Endothelial cell of umbilical vein (primary cell): ENCODE measurements at regions of chr5 and their contacts with region 1.

Region 1: DNA sequence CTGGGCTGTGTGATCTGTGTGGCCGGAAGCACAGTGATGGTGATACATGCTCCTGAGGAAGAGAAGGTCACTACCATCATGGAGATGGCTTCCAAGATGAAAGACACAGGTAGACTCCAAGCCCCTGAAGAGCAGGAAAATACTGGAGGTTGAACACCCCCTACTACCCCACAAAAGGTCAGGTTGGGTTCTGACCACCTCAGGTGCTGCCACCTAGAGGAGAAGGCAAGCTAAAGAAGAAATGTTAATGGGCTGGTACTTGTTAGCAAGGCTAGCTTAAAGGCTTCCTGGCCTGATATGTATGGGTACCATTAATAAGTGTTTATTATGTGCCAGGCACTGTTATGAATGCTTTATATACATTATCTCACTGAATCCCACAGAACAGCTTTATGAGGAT is 11.7 kb downstream of the NIPAL4 start:
- DNase-seq: peak; percentile 27
- H3K4me3 ChIP-seq: no peak overlapping the region
- H3K27ac ChIP-seq: no peak overlapping the region
- H3K4me1 ChIP-seq: peaks cover 6% of the 10 kb centered on the region
- H3K27me3 ChIP-seq: no peaks in the 10 kb centered on the region
- CTCF ChIP-seq: peak; percentile 48 to 57
- POLR2A ChIP-seq: no peak

Region 2: DNA sequence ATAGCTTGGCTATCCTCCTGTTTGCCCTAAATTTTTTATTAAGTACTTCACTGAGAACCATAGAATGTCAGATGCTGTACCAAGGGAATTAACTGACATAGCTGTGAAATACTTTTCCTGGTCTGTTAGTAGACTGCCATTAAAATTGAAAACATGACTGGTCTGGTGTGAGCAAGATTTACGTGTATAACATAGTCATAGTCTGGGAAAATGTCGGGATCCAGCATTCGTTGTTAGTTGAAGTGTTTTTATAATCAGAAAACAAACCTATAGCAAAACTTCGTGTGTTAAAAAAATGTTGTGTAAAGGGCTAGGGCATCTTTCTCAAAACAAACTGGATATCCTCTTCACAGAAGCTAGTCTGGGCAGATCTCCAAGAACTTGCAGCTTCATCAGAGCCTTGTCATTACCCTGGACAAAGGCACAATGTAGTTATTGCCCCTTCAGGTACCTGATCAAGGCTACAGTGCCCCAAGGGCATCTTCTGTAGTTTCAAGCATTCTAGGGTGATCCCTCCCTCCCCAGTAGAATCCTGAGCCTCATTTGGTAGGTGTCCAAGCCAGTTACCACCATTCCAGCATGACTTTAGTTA is 1599.0 kb before region 1 on chr5:
- CTCF ChIA-PET with region 1: no interaction called
- POLR2A ChIA-PET with region 1: no interaction called
- dilution Hi-C with region 1: no loop called
- intact Hi-C with region 1: no loop called
- DNase-seq: no peak
- H3K4me3 ChIP-seq: no peak overlapping the region
- H3K27ac ChIP-seq: no peak overlapping the region
- H3K4me1 ChIP-seq: no peaks in the 10 kb centered on the region
- H3K27me3 ChIP-seq: no peaks in the 10 kb centered on the region
- CTCF ChIP-seq: no peak
- POLR2A ChIP-seq: no peak

Region 3: GRCh38 chr5:157108976-157109375 is 362.7 kb before region 1 on chr5 and contains the start of gene HAVCR2:
- CTCF ChIA-PET with region 1: no interaction called
- POLR2A ChIA-PET with region 1: no interaction called
- dilution Hi-C with region 1: no loop called
- intact Hi-C with region 1: no loop called
- DNase-seq: no peak
- H3K4me3 ChIP-seq: no peak within 1 kb of the TSS
- H3K27ac ChIP-seq: no peak within 1 kb of the TSS
- H3K4me1 ChIP-seq: no peaks in the 10 kb centered on the region
- H3K27me3 ChIP-seq: no peaks in the 10 kb centered on the region
- CTCF ChIP-seq: no peak
- POLR2A ChIP-seq: no peak
- total RNA-seq, gene HAVCR2: 0.42 TPM in 1 of 2 replicates, not detected in the other

Region 4: GRCh38 chr5:157303667-157304327 is 167.9 kb before region 1 on chr5:
- CTCF ChIA-PET with region 1: no interaction called
- POLR2A ChIA-PET with region 1: no interaction called
- dilution Hi-C with region 1: no loop called
- intact Hi-C with region 1: no loop called
- DNase-seq: no peak
- H3K4me3 ChIP-seq: no peak overlapping the region
- H3K27ac ChIP-seq: no peak overlapping the region
- H3K4me1 ChIP-seq: no peaks in the 10 kb centered on the region
- H3K27me3 ChIP-seq: no peaks in the 10 kb centered on the region
- CTCF ChIP-seq: peak; percentile 13 to 16
- POLR2A ChIP-seq: no peak

Region 5: DNA sequence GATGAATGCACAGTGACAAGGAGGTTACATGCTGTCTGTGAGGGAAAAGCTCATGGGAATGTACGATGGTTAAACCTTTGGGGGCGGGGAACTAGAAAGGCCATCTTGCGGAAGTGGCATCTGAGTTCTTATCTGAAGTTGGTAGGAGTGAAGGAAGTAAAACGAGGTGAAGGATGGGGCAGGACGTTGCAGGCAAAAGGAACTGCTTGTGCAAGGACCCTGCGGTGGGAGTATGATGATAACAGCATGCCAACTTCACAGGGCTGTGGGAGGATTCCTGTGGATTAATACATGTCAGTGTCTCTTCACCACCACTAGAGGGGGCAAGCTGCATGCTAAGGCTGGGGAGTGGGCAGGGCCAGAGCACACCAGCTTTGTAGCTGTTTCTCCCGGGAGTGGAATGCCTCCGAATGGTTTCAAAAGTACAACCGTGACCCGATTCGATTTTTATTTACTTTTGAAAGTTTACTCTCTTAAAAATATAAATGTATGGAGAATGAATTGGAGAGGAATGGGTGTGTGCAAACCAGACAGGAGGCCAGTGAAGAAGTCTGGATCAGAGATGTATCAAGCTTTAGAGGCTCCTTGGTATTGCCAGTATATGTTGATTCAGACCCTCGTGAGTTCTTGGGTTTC is 143.3 kb before region 1 on chr5:
- CTCF ChIA-PET with region 1: interaction called, 110 read pairs
- POLR2A ChIA-PET with region 1: no interaction called
- dilution Hi-C with region 1: loop called (anchors 25 kb)
- intact Hi-C with region 1: loop called (anchors 1 kb)
- DNase-seq: peak; percentile 71
- H3K4me3 ChIP-seq: no peak overlapping the region
- H3K27ac ChIP-seq: no peak overlapping the region
- H3K4me1 ChIP-seq: no peaks in the 10 kb centered on the region
- H3K27me3 ChIP-seq: no peaks in the 10 kb centered on the region
- CTCF ChIP-seq: peak; percentile 91 to 93
- POLR2A ChIP-seq: no peak

Region 6: DNA sequence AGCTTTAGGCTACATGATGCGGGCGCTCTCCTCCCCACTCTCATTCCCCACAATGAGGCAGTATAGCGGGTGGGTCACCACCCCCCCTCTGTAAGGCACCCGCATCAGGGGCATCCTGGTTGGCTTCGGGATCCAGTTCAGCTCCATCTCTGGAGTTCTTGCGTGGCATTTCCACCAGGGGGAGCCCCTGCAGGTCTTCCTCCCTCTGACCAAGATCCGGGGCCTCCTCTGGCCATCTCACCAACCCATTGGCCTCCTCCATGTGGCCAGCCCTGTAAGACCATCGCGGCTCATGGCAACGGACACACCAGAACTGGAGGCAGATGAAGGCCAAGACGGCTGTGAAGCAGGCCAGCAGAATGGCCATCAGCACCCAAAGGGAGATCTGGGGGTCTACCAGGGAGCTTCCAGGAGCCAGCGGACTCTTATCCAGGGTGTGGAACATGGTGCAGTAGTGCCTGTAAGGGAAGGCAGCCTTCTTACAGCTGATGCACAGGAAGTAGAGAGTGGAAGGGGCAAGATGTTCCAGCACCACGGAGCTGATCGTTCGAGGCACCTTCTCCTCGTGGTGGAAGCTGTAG is 128.8 kb before region 1 on chr5:
- CTCF ChIA-PET with region 1: interaction called, 52 read pairs
- POLR2A ChIA-PET with region 1: no interaction called
- dilution Hi-C with region 1: loop called (anchors 25 kb)
- intact Hi-C with region 1: loop called (anchors 1 kb)
- DNase-seq: peak; percentile 28
- H3K4me3 ChIP-seq: no peak overlapping the region
- H3K27ac ChIP-seq: no peak overlapping the region
- H3K4me1 ChIP-seq: no peaks in the 10 kb centered on the region
- H3K27me3 ChIP-seq: peaks cover 0 to 3% of the 10 kb centered on the region in 2 experiments
- CTCF ChIP-seq: peak; percentile 65
- POLR2A ChIP-seq: no peak

Region 7: DNA sequence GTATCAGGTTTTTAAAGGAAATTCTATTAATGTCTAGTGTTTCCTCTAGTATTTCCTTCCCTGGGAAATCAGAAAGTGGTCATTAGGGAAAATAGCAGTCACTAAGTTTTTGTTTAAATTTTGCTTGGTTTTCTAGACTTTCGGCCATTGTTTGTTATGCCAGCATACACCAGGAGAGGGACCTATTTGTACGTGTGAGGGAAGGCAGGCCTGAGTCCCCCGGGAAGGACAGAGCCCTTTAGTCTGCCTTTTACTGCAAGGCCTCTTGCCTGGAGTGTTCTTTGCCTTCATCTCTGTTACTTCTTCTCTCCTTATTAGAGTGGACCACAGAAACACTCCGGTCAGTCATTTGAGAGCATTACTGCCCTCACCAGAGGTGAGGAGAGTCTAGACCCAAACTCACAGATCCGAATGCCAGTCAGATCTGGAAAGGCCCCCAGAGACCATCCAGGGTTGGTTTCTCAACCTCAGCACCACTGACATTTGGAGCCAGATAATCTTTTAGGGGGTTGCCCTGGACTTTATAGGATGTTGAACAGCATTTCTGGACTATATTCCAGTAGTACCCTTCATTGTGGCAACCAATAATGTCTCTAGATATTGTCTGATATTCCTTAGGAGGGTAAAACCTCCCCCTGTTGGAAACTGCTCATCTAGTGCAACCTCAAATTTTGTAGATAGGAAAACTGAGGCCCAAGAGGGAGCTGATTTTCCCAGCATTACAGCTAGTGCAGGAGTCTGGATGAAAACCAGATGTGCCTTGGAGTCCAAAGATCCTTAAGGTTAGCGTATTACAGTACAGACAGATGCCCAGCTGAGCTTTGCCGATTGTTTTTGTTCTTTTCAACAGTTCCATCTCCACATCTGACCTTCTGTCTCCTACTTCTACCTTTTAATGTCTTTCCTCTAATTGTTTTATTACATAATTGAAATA is 104.7 kb before region 1 on chr5:
- CTCF ChIA-PET with region 1: interaction called, 25 read pairs
- POLR2A ChIA-PET with region 1: interaction called, 4 read pairs
- dilution Hi-C with region 1: no loop called
- intact Hi-C with region 1: loop called (anchors 1 kb)
- DNase-seq: peak; percentile 70
- H3K4me3 ChIP-seq: no peak overlapping the region
- H3K27ac ChIP-seq: no peak overlapping the region
- H3K4me1 ChIP-seq: no peaks in the 10 kb centered on the region
- H3K27me3 ChIP-seq: no peaks in the 10 kb centered on the region
- CTCF ChIP-seq: peak; percentile 60 to 71
- POLR2A ChIP-seq: no peak

Region 8: GRCh38 chr5:157431544-157432200 is 40.0 kb before region 1 on chr5:
- CTCF ChIA-PET with region 1: interaction called, 34 read pairs
- POLR2A ChIA-PET with region 1: no interaction called
- dilution Hi-C with region 1: no loop called
- intact Hi-C with region 1: loop called (anchors 2 kb)
- DNase-seq: peak; percentile 64
- H3K4me3 ChIP-seq: no peak overlapping the region
- H3K27ac ChIP-seq: no peak overlapping the region
- H3K4me1 ChIP-seq: no peaks in the 10 kb centered on the region
- H3K27me3 ChIP-seq: no peaks in the 10 kb centered on the region
- CTCF ChIP-seq: peak; percentile 16 to 20
- POLR2A ChIP-seq: no peak

Region 9: GRCh38 chr5:157459715-157460599 is 11.8 kb before region 1 on chr5 and contains the start of gene NIPAL4:
- CTCF ChIA-PET with region 1: interaction called, 12 read pairs
- POLR2A ChIA-PET with region 1: no interaction called
- dilution Hi-C with region 1: no loop called
- intact Hi-C with region 1: no loop called
- DNase-seq: no peak
- H3K4me3 ChIP-seq: peak within 1 kb of the TSS in 2 of 3 experiments; percentile 13 to 19
- H3K27ac ChIP-seq: no peak within 1 kb of the TSS
- H3K4me1 ChIP-seq: no peaks in the 10 kb centered on the region
- H3K27me3 ChIP-seq: peaks cover 22 to 29% of the 10 kb centered on the region in 2 experiments
- CTCF ChIP-seq: no peak
- POLR2A ChIP-seq: no peak
- total RNA-seq, gene NIPAL4: not detected in 2 replicates

Region 10: GRCh38 chr5:157718519-157718918 is 246.8 kb after region 1 on chr5:
- CTCF ChIA-PET with region 1: interaction called, 19 read pairs
- POLR2A ChIA-PET with region 1: no interaction called
- dilution Hi-C with region 1: no loop called
- intact Hi-C with region 1: no loop called
- DNase-seq: peak; percentile 78
- H3K4me3 ChIP-seq: no peak overlapping the region
- H3K27ac ChIP-seq: no peak overlapping the region
- H3K4me1 ChIP-seq: no peaks in the 10 kb centered on the region
- H3K27me3 ChIP-seq: no peaks in the 10 kb centered on the region
- CTCF ChIP-seq: peak; percentile 46 to 56
- POLR2A ChIP-seq: no peak